Activated naive CD4-positive, alpha-beta T cell treated with anti-CD3 and anti-CD28 coated beads for 36 hours (primary cell): ENCODE measurements at regions of chr10 and their contacts with region 1.

Region 1: DNA sequence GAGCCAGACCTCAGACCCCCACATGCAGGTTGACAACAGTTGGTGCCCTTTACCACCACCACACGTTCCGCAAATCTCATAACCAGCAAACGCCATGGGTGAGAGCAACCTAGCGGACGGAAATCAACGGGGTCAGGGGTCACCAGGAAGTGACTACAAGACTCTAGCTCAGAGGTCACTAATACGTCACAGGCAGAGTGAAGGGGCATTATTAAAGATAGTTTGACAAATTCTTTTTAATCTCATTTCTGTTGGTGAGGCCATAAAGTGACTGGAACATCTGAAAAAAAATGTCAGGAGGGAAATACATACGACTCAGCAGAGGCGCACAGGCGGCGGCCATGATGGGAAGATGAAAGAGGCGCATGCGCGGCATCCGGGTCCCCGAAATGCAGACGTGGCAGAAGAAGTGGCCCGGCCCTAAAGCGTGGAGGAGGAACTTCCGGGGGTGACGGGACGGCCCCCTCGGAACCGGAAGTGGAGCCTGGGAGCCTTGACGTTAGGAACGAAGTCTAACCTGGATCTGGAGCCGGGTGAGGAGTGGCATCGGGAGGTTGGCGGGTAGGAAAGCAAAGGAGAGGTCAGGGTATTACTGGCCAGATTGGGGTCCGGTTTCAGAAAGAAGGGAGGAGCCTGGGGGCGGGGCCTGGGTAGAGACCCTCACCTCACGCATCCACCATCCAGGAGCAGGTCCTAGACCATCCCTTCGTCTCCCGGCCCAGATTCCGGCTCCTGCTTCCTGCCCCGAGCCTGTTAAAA is at the start of gene SEC24C:
- DNase-seq: peak; percentile 98
- H3K4me3 Mint-ChIP-seq: peak within 1 kb of the TSS; percentile 98
- H3K27ac Mint-ChIP-seq: peak within 1 kb of the TSS; percentile 100
- H3K4me1 Mint-ChIP-seq: peaks cover 44% of the 10 kb centered on the region
- H3K27me3 Mint-ChIP-seq: no peaks in the 10 kb centered on the region
- total RNA-seq, gene SEC24C: 67.0 to 68.1 TPM

Region 2: GRCh38 chr10:73252445-73253224 is 491.4 kb before region 1 on chr10 and contains the start of gene MRPS16:
- CTCF ChIA-PET with region 1: no interaction called
- intact Hi-C with region 1: loop called (anchors 1 kb)
- DNase-seq: peak; percentile 97
- H3K4me3 Mint-ChIP-seq: peak within 1 kb of the TSS; percentile 98
- H3K27ac Mint-ChIP-seq: peak within 1 kb of the TSS; percentile 94
- H3K4me1 Mint-ChIP-seq: peaks cover 38% of the 10 kb centered on the region
- H3K27me3 Mint-ChIP-seq: no peaks in the 10 kb centered on the region
- total RNA-seq, gene MRPS16: 140 to 145 TPM

Region 3: GRCh38 chr10:73730153-73730906 is 13.8 kb before region 1 on chr10:
- CTCF ChIA-PET with region 1: interaction called, 5 read pairs
- intact Hi-C with region 1: loop called (anchors 1 kb)
- DNase-seq: peak; percentile 95
- H3K4me3 Mint-ChIP-seq: peak overlapping the region; percentile 91
- H3K27ac Mint-ChIP-seq: peak overlapping the region; percentile 97
- H3K4me1 Mint-ChIP-seq: peaks cover 16% of the 10 kb centered on the region
- H3K27me3 Mint-ChIP-seq: no peaks in the 10 kb centered on the region

Region 4: DNA sequence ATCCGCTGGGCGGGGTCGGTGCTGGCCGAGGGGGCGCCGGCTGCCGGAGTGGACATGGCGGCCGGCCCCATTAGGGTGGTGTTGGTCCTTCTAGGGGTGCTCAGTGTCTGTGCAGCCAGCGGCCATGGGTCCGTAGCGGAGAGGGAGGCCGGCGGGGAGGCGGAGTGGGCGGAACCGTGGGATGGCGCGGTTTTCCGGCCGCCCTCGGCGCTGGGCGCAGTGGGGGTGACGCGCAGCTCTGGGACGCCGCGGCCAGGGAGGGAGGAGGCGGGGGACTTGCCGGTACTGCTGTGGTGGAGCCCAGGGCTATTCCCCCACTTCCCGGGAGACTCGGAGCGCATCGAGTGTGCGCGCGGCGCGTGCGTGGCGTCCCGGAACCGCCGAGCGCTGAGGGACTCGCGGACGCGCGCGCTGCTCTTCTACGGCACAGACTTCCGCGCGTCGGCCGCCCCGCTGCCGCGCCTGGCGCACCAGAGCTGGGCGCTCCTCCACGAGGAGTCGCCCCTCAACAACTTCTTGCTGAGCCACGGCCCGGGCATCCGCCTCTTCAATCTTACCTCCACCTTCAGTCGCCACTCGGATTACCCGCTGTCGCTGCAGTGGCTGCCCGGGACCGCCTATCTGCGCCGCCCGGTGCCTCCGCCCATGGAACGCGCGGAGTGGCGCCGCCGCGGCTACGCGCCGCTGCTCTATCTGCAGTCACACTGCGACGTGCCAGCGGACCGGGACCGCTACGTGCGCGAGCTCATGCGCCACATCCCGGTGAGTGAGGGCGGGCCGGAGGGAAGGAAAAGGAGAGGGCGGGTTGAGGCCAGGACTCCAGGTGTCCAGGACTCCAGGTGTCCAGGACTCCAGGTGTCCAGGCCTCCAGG is 28.4 kb after region 1 on chr10:
- CTCF ChIA-PET with region 1: interaction called, 5 read pairs
- intact Hi-C with region 1: loop called (anchors 2 kb)
- DNase-seq: peak; percentile 81
- H3K4me3 Mint-ChIP-seq: peak overlapping the region; percentile 93
- H3K27ac Mint-ChIP-seq: peak overlapping the region; percentile 93
- H3K4me1 Mint-ChIP-seq: peaks cover 44% of the 10 kb centered on the region
- H3K27me3 Mint-ChIP-seq: no peaks in the 10 kb centered on the region

Region 5: DNA sequence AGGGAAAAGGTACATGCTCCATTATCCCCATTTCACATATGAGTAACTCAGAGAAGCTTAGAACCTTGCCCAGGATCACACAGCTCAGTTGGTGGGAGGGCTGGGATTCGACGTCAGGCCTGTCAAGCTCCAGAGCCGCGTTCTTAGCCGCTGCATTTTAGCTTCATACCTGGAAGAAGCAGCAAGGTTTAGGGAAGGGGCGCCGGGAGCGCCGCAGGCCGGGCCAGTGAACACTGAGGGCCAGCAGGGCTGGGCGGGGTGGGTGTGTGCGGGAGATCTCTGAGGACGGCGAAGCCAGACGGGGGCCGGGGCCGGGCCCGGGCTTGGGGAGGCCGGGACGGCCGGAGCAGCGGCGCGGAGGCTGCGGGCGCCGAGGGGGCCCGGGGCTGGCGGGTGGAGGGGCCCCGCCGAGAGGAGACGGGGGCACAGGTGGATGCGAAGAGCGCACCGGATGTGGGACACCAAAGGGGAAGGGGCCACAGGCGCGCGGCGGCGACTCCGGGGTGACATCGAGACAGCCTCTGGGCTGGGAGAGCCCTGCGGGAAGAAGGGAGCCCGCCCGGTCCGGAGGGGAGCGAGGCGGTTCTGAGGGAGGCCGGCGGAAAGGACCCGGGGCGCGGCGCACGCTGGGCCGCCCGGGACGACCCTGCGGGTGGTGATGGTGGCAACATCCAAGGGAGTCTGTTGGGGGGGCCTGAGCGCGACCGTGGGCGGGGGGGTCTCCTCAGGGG is 66.8 kb after region 1 on chr10:
- CTCF ChIA-PET with region 1: no interaction called
- intact Hi-C with region 1: loop called (anchors 1 kb)
- DNase-seq: peak; percentile 63
- H3K4me3 Mint-ChIP-seq: peak overlapping the region; percentile 93
- H3K27ac Mint-ChIP-seq: peak overlapping the region; percentile 99
- H3K4me1 Mint-ChIP-seq: peaks cover 47% of the 10 kb centered on the region
- H3K27me3 Mint-ChIP-seq: no peaks in the 10 kb centered on the region

Region 6: DNA sequence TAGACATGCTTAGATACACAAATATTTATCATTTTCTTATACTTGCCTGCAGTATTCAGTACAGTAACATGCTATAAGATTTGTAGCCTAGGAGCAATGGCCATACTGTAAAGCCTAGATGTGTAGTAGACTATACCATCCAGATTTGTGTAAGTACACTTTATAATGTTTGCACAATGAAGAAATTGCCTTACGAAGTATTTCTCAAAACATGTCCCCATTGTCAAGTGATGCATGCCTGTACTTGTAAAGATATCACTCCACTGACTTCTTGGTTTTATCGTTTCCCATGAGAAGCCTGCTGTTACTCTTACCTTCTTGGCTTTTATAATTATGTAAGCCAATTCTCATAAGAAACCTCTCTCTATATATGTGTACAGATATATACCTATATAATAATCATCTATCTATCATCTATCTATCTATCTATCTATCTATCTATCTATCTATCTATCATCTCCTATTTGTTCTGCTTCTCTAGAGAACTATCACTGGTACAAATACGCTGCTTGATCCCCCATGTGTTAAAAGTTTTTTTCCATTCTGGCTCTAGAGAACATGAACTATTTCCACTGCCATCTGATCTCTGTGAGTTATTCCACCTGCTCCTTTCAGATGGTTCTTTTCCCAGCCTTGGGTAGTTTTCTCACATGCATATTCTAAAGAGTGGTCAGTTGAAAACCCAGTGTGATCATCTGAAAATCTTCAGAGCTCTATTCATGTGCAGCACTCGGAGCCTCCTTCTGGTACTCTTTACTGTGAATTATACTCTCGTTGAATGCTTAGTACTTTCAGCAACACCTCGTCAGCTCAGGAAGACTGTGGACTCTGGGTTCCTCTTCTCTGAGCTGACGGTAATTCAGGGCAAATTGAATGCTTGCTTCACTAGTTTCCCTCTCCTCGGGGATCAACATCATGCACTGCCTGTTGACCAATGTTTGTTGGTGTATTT is 239.3 kb after region 1 on chr10:
- CTCF ChIA-PET with region 1: no interaction called
- intact Hi-C with region 1: no loop called
- DNase-seq: no peak
- H3K4me3 Mint-ChIP-seq: no peak overlapping the region
- H3K27ac Mint-ChIP-seq: no peak overlapping the region
- H3K4me1 Mint-ChIP-seq: peaks cover 5% of the 10 kb centered on the region
- H3K27me3 Mint-ChIP-seq: no peaks in the 10 kb centered on the region